Naive thymus-derived CD4-positive, alpha-beta T cell (primary cell): ENCODE measurements at regions of chr5 and their contacts with region 1.

Region 1: GRCh38 chr5:95554647-95555548 is at the starts of genes ARSK and SKIC3:
- DNase-seq: peak; percentile 76 to 98 (median 97)
- ATAC-seq: peak; percentile 93
- H3K4me3 ChIP-seq: peak within 1 kb of the TSS; percentile 71
- H3K4me3 Mint-ChIP-seq: peak within 1 kb of the TSS; percentile 90 to 100 (median 96)
- H3K27ac ChIP-seq: peak within 1 kb of the TSS; percentile 83
- H3K27ac Mint-ChIP-seq: peak within 1 kb of the TSS; percentile 92 to 98 (median 94)
- H3K4me1 ChIP-seq: peaks cover 20 to 27% of the 10 kb centered on the region in 2 donors
- H3K4me1 Mint-ChIP-seq: peaks cover 26 to 66% (median 47%) of the 10 kb centered on the region in 7 donors
- H3K27me3 ChIP-seq: no peaks in the 10 kb centered on the region
- H3K27me3 Mint-ChIP-seq: peaks cover 0 to 2% (median 0%) of the 10 kb centered on the region in 5 donors
- total RNA-seq, gene ARSK: 2.5 to 8.5 (median 4.5) TPM
- total RNA-seq, gene SKIC3: 74.6 to 103 (median 81.0) TPM

Region 2: DNA sequence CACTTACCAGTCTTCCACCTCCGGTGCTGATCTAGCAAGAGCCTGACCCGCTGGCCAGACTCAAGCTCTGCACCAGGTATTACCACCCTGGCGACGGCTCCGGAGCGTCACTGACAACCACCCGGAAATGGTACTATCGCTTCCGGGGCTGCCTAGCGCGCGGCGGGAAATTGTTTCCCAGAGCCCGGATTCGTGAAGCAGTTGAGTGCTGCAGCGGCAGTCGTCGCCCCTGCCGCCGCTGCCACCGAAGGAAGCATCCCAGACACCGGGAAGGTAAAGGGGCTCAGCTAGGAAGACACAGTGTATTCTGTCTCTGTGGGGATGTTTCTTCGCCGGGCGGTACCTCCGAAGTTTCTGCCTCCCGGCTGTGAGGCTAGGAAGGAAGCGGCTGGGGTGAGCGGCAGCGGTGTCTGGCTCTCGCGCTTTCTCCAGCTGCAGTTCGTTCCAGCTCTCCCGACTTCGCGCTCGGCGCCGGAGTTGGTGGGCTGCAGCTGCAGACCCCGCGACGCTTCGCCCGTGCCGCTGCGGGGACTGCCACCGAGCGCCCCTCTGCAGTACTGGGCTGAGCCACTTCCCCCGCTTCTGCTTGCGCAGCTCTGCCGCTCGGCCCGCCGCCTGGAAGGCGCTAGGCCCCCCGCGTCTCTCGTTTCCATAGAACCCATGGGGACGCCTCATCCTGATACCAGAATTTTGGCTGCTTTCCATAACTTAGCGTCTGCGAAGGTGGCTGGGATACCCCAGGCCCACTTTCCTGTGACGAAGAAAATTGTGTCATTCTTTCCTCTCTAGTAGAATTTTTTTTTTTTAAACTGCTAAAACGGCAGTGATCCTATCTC is 936.2 kb before region 1 on chr5 and contains the starts of genes KIAA0825 and SLF1:
- CTCF ChIA-PET with region 1: no interaction called
- POLR2A ChIA-PET with region 1: no interaction called
- intact Hi-C with region 1: loop called (anchors 1 to 10 kb)
- DNase-seq: peak; percentile 69 to 86 (median 83)
- ATAC-seq: peak; percentile 94
- H3K4me3 ChIP-seq: peak within 1 kb of the TSS; percentile 79
- H3K4me3 Mint-ChIP-seq: peak within 1 kb of the TSS; percentile 92 to 99 (median 96)
- H3K27ac ChIP-seq: peak within 1 kb of the TSS; percentile 63
- H3K27ac Mint-ChIP-seq: peak within 1 kb of the TSS; percentile 30 to 96 (median 89)
- H3K4me1 ChIP-seq: peaks cover 6 to 10% of the 10 kb centered on the region in 2 donors
- H3K4me1 Mint-ChIP-seq: peaks cover 18 to 47% (median 43%) of the 10 kb centered on the region in 7 donors
- H3K27me3 ChIP-seq: no peaks in the 10 kb centered on the region
- H3K27me3 Mint-ChIP-seq: no peaks in the 10 kb centered on the region
- total RNA-seq, gene KIAA0825: 1.2 to 3.2 (median 1.5) TPM
- total RNA-seq, gene SLF1: 6.7 to 13.4 (median 11.3) TPM

Region 3: GRCh38 chr5:95081500-95081960 is 473.4 kb before region 1 on chr5:
- CTCF ChIA-PET with region 1: no interaction called
- POLR2A ChIA-PET with region 1: no interaction called
- intact Hi-C with region 1: no loop called
- DNase-seq: peak in 5 of 9 donors; percentile 14 to 48 (median 32)
- ATAC-seq: peak; percentile 89
- H3K4me3 ChIP-seq: no peak overlapping the region
- H3K4me3 Mint-ChIP-seq: peak overlapping the region; percentile 43 to 87 (median 75)
- H3K27ac ChIP-seq: no peak overlapping the region
- H3K27ac Mint-ChIP-seq: peak overlapping the region in 8 of 9 donors; percentile 14 to 88 (median 66)
- H3K4me1 ChIP-seq: no peaks in the 10 kb centered on the region
- H3K4me1 Mint-ChIP-seq: peaks cover 7 to 27% (median 17%) of the 10 kb centered on the region in 7 donors
- H3K27me3 ChIP-seq: no peaks in the 10 kb centered on the region
- H3K27me3 Mint-ChIP-seq: peaks cover 0 to 11% (median 4%) of the 10 kb centered on the region in 5 donors

Region 4: GRCh38 chr5:95511606-95512005 is 43.3 kb before region 1 on chr5:
- CTCF ChIA-PET with region 1: no interaction called
- POLR2A ChIA-PET with region 1: no interaction called
- intact Hi-C with region 1: no loop called
- DNase-seq: no peak
- ATAC-seq: no peak
- H3K4me3 ChIP-seq: no peak overlapping the region
- H3K4me3 Mint-ChIP-seq: no peak overlapping the region
- H3K27ac ChIP-seq: no peak overlapping the region
- H3K27ac Mint-ChIP-seq: peak overlapping the region in 2 of 9 donors; percentile 9 to 33
- H3K4me1 ChIP-seq: no peaks in the 10 kb centered on the region
- H3K4me1 Mint-ChIP-seq: peaks cover 0 to 4% (median 0%) of the 10 kb centered on the region in 7 donors
- H3K27me3 ChIP-seq: no peaks in the 10 kb centered on the region
- H3K27me3 Mint-ChIP-seq: no peaks in the 10 kb centered on the region

Region 5: GRCh38 chr5:95631991-95632675 is 77.2 kb after region 1 on chr5:
- CTCF ChIA-PET with region 1: interaction called, 12 read pairs
- POLR2A ChIA-PET with region 1: interaction called, 13 read pairs
- intact Hi-C with region 1: loop called (anchors 1 kb)
- DNase-seq: peak; percentile 27 to 86 (median 79)
- ATAC-seq: peak; percentile 98
- H3K4me3 ChIP-seq: peak overlapping the region; percentile 8
- H3K4me3 Mint-ChIP-seq: peak overlapping the region; percentile 21 to 79 (median 69)
- H3K27ac ChIP-seq: peak overlapping the region; percentile 65
- H3K27ac Mint-ChIP-seq: peak overlapping the region; percentile 90 to 99 (median 94)
- H3K4me1 ChIP-seq: peaks cover 6 to 24% of the 10 kb centered on the region in 2 donors
- H3K4me1 Mint-ChIP-seq: peaks cover 15 to 52% (median 35%) of the 10 kb centered on the region in 7 donors
- H3K27me3 ChIP-seq: no peaks in the 10 kb centered on the region
- H3K27me3 Mint-ChIP-seq: peaks cover 0 to 10% (median 0%) of the 10 kb centered on the region in 5 donors

Region 6: GRCh38 chr5:95730730-95731570 is 176.1 kb after region 1 on chr5 and contains the start of gene RHOBTB3:
- CTCF ChIA-PET with region 1: no interaction called
- POLR2A ChIA-PET with region 1: no interaction called
- intact Hi-C with region 1: loop called in 1 of 2 experiments (anchors 2 kb)
- DNase-seq: peak; percentile 20 to 58 (median 41)
- ATAC-seq: peak; percentile 77
- H3K4me3 ChIP-seq: peak within 1 kb of the TSS; percentile 64
- H3K4me3 Mint-ChIP-seq: peak within 1 kb of the TSS; percentile 83 to 94 (median 88)
- H3K27ac ChIP-seq: peak within 1 kb of the TSS; percentile 9
- H3K27ac Mint-ChIP-seq: peak within 1 kb of the TSS in 8 of 9 donors; percentile 30 to 88 (median 62)
- H3K4me1 ChIP-seq: peaks cover 0 to 20% of the 10 kb centered on the region in 2 donors
- H3K4me1 Mint-ChIP-seq: peaks cover 32 to 88% (median 63%) of the 10 kb centered on the region in 7 donors
- H3K27me3 ChIP-seq: peaks cover 4 to 6% of the 10 kb centered on the region in 2 donors
- H3K27me3 Mint-ChIP-seq: peaks cover 6 to 79% (median 13%) of the 10 kb centered on the region in 5 donors
- total RNA-seq, gene RHOBTB3: 0.24 to 9.6 (median 1.6) TPM

Region 7: GRCh38 chr5:95846554-95847260 is 291.8 kb after region 1 on chr5:
- CTCF ChIA-PET with region 1: no interaction called
- POLR2A ChIA-PET with region 1: interaction called, 8 read pairs
- intact Hi-C with region 1: loop called (anchors 1 to 2 kb)
- DNase-seq: peak; percentile 38 to 73 (median 68)
- ATAC-seq: peak; percentile 88
- H3K4me3 ChIP-seq: no peak overlapping the region
- H3K4me3 Mint-ChIP-seq: no peak overlapping the region
- H3K27ac ChIP-seq: no peak overlapping the region
- H3K27ac Mint-ChIP-seq: peak overlapping the region in 2 of 9 donors; percentile 3 to 18
- H3K4me1 ChIP-seq: peaks cover 10 to 13% of the 10 kb centered on the region in 2 donors
- H3K4me1 Mint-ChIP-seq: peaks cover 10 to 33% (median 16%) of the 10 kb centered on the region in 7 donors
- H3K27me3 ChIP-seq: no peaks in the 10 kb centered on the region
- H3K27me3 Mint-ChIP-seq: peaks cover 0 to 15% (median 0%) of the 10 kb centered on the region in 5 donors

Region 8: DNA sequence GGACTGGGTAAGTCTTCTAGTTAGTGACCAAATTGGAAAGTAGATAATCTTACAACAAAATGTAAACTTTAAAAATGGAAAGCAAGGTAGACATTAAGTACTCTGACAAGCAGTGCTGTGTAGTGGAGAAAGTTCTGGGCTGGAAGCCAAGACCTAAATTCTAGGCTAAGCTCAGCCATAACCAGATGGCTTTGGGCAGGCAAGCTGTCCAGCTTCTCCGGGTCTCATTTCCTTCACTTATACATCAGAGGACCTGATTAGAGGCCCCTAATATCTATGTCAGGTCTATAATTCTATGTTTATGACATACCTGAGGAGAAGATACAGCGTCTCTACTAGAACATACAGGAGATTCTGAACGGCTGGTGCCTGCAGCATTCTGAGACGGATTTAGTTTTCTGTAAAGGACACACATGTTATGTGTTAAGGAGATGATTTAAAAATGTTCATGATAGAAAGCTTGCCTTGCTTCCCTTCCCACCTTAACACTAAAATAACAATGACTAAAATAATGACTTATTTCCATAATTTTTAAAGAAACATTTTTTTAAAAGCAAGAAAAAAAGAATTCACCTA is 345.6 kb after region 1 on chr5:
- CTCF ChIA-PET with region 1: no interaction called
- POLR2A ChIA-PET with region 1: no interaction called
- intact Hi-C with region 1: no loop called
- DNase-seq: no peak
- ATAC-seq: no peak
- H3K4me3 ChIP-seq: no peak overlapping the region
- H3K4me3 Mint-ChIP-seq: no peak overlapping the region
- H3K27ac ChIP-seq: no peak overlapping the region
- H3K27ac Mint-ChIP-seq: no peak overlapping the region
- H3K4me1 ChIP-seq: no peaks in the 10 kb centered on the region
- H3K4me1 Mint-ChIP-seq: peaks cover 0 to 11% (median 0%) of the 10 kb centered on the region in 7 donors
- H3K27me3 ChIP-seq: no peaks in the 10 kb centered on the region
- H3K27me3 Mint-ChIP-seq: no peaks in the 10 kb centered on the region

Region 9: GRCh38 chr5:96816411-96816939 is 1261.6 kb after region 1 on chr5:
- CTCF ChIA-PET with region 1: no interaction called
- POLR2A ChIA-PET with region 1: no interaction called
- intact Hi-C with region 1: loop called in 1 of 2 experiments (anchors 10 kb)
- DNase-seq: peak in 8 of 9 donors; percentile 37 to 85 (median 76)
- ATAC-seq: peak; percentile 91
- H3K4me3 ChIP-seq: peak overlapping the region; percentile 64
- H3K4me3 Mint-ChIP-seq: peak overlapping the region; percentile 65 to 93 (median 82)
- H3K27ac ChIP-seq: peak overlapping the region; percentile 70
- H3K27ac Mint-ChIP-seq: peak overlapping the region; percentile 74 to 100 (median 94)
- H3K4me1 ChIP-seq: peaks cover 29 to 59% of the 10 kb centered on the region in 2 donors
- H3K4me1 Mint-ChIP-seq: peaks cover 51 to 95% (median 89%) of the 10 kb centered on the region in 7 donors
- H3K27me3 ChIP-seq: no peaks in the 10 kb centered on the region
- H3K27me3 Mint-ChIP-seq: no peaks in the 10 kb centered on the region